ENCODE measurements at regions of chr3 and their contacts with region 1.

Region 1: GRCh38 chr3:144097139-144097538 is 125.5 kb downstream of the DIPK2A start:
- DNase-seq: peak; percentile 14
- ATAC-seq: no peak

Region 2: GRCh38 chr3:143885780-143886427 is 211.2 kb before region 1 on chr3:
- intact Hi-C with region 1: loop called (anchors 10 kb)
- DNase-seq: no peak
- ATAC-seq: no peak